ENCODE measurements at regions of chr2 and their contacts with region 1.

Region 1: GRCh38 chr2:108124736-108125495 is 114.9 kb upstream of the SULT1C3 start:
- DNase-seq: no peak
- H3K4me3 ChIP-seq: no peak overlapping the region
- H3K4me3 Mint-ChIP-seq: no peak overlapping the region
- H3K27ac Mint-ChIP-seq: no peak overlapping the region
- H3K4me1 ChIP-seq: no peaks in the 10 kb centered on the region
- H3K4me1 Mint-ChIP-seq: no peaks in the 10 kb centered on the region
- H3K27me3 ChIP-seq: no peaks in the 10 kb centered on the region
- H3K27me3 Mint-ChIP-seq: no peaks in the 10 kb centered on the region
- CTCF ChIP-seq: no peak

Region 2: GRCh38 chr2:108029496-108029895 is 95.4 kb before region 1 on chr2:
- CTCF ChIA-PET with region 1: no interaction called
- POLR2A ChIA-PET with region 1: interaction called, 10 read pairs
- intact Hi-C with region 1: no loop called
- DNase-seq: no peak
- H3K4me3 ChIP-seq: no peak overlapping the region
- H3K4me3 Mint-ChIP-seq: no peak overlapping the region
- H3K27ac Mint-ChIP-seq: no peak overlapping the region
- H3K4me1 ChIP-seq: no peaks in the 10 kb centered on the region
- H3K4me1 Mint-ChIP-seq: no peaks in the 10 kb centered on the region
- H3K27me3 ChIP-seq: no peaks in the 10 kb centered on the region
- H3K27me3 Mint-ChIP-seq: no peaks in the 10 kb centered on the region
- CTCF ChIP-seq: no peak

Measured in Caco-2 (cell line).